CD8-positive, alpha-beta T cell (primary cell): ENCODE measurements at regions of chr15 and their contacts with region 1.

Region 1: GRCh38 chr15:34969340-34970097 is at the start of gene AQR:
- DNase-seq: peak; percentile 81 to 97 (median 91)
- ATAC-seq: peak; percentile 98
- H3K4me3 ChIP-seq: peak within 1 kb of the TSS; percentile 65 to 73
- H3K4me3 Mint-ChIP-seq: peak within 1 kb of the TSS; percentile 98
- H3K27ac ChIP-seq: peak within 1 kb of the TSS; percentile 62 to 72
- H3K27ac Mint-ChIP-seq: peak within 1 kb of the TSS; percentile 92
- H3K4me1 ChIP-seq: peaks cover 27% of the 10 kb centered on the region
- H3K4me1 Mint-ChIP-seq: peaks cover 50% of the 10 kb centered on the region
- H3K27me3 ChIP-seq: no peaks in the 10 kb centered on the region
- H3K27me3 Mint-ChIP-seq: no peaks in the 10 kb centered on the region
- CTCF ChIP-seq: peak; percentile 73
- total RNA-seq, gene AQR: 31.3 to 37.1 TPM

Region 2: DNA sequence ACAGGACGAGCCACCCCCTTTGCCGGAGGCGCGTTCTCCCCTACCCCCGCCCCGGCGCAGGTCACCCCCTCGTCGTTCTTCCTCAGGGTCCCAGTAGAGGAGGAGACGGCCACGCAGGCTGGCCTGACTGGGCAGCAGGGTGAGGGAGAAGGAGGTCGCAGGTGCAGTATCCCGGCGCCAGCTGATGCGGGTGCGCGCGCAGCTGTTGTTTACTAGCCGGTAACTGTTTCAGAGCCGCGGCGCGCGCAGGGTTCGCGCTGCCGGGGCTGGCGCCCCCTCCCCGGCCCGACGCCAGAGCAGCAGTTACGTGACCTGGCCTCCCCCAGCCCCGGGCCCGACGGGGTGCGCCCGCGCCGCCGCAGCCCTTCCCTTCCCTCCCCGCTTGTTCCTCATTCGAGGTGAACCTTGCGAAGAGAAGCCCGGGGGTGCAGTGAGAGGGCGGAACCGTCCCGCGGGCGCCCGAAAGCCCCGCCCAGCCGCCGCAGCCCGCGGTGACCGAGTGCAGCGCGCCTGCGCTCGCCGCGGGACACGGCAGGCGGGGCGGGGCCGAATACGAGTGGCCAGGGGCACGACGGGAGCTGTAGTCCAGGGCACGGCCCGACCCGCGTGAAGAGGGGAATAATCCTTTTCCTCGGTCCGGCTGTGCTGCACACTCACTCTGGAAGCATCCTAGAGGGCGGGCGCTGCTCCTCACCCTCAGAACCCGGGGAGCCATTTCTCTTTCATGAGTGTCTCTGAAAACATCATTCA is 631.8 kb before region 1 on chr15 and contains the start of gene SLC12A6:
- CTCF ChIA-PET with region 1: no interaction called
- POLR2A ChIA-PET with region 1: no interaction called
- intact Hi-C with region 1: loop called in 1 of 2 experiments (anchors 10 kb)
- DNase-seq: peak; percentile 81 to 95 (median 89)
- ATAC-seq: peak; percentile 84
- H3K4me3 ChIP-seq: peak within 1 kb of the TSS; percentile 81 to 97
- H3K4me3 Mint-ChIP-seq: peak within 1 kb of the TSS; percentile 98
- H3K27ac ChIP-seq: peak within 1 kb of the TSS; percentile 75 to 80
- H3K27ac Mint-ChIP-seq: peak within 1 kb of the TSS; percentile 97
- H3K4me1 ChIP-seq: peaks cover 55% of the 10 kb centered on the region
- H3K4me1 Mint-ChIP-seq: peaks cover 61% of the 10 kb centered on the region
- H3K27me3 ChIP-seq: no peaks in the 10 kb centered on the region
- H3K27me3 Mint-ChIP-seq: no peaks in the 10 kb centered on the region
- CTCF ChIP-seq: no peak
- total RNA-seq, gene SLC12A6: 55.7 to 60.8 TPM

Region 3: DNA sequence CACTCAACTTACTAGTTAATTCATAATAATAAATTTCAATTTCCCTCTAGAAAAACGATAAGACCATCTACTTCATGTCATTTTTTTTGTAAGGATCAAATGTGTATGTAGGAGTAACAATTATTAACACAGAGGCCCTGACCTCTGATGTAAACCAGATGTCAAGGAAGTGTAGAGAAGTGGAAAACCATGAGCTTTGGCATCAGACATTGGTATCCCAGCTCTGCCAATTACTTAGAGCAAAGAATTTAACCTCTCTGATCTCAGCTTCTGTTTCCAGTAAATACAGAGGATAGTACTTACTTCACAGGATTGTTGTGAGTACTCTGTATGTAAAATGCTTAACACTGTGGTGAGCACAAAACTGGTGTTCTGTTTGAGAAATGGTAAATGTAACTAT is 17.5 kb before region 1 on chr15:
- CTCF ChIA-PET with region 1: interaction called, 4 read pairs
- POLR2A ChIA-PET with region 1: interaction called, 5 read pairs
- intact Hi-C with region 1: loop called in 1 of 2 experiments (anchors 2 kb)
- DNase-seq: no peak
- ATAC-seq: no peak
- H3K4me3 ChIP-seq: no peak overlapping the region
- H3K4me3 Mint-ChIP-seq: no peak overlapping the region
- H3K27ac ChIP-seq: no peak overlapping the region
- H3K27ac Mint-ChIP-seq: no peak overlapping the region
- H3K4me1 ChIP-seq: no peaks in the 10 kb centered on the region
- H3K4me1 Mint-ChIP-seq: peaks cover 11% of the 10 kb centered on the region
- H3K27me3 ChIP-seq: no peaks in the 10 kb centered on the region
- H3K27me3 Mint-ChIP-seq: no peaks in the 10 kb centered on the region
- CTCF ChIP-seq: no peak

Region 4: GRCh38 chr15:34987985-34988873 is 18.7 kb after region 1 on chr15 and contains the start of gene ZNF770:
- CTCF ChIA-PET with region 1: interaction called, 33 read pairs
- POLR2A ChIA-PET with region 1: interaction called, 66 read pairs
- intact Hi-C with region 1: loop called (anchors 1 kb)
- DNase-seq: peak; percentile 72 to 93 (median 81)
- ATAC-seq: peak; percentile 89
- H3K4me3 ChIP-seq: peak within 1 kb of the TSS; percentile 99 to 100
- H3K4me3 Mint-ChIP-seq: peak within 1 kb of the TSS; percentile 99
- H3K27ac ChIP-seq: peak within 1 kb of the TSS; percentile 95 to 96
- H3K27ac Mint-ChIP-seq: peak within 1 kb of the TSS; percentile 99
- H3K4me1 ChIP-seq: peaks cover 24% of the 10 kb centered on the region
- H3K4me1 Mint-ChIP-seq: peaks cover 45% of the 10 kb centered on the region
- H3K27me3 ChIP-seq: no peaks in the 10 kb centered on the region
- H3K27me3 Mint-ChIP-seq: peaks cover 1% of the 10 kb centered on the region
- CTCF ChIP-seq: no peak
- total RNA-seq, gene ZNF770: 32.9 to 37.7 TPM